PC-9 (cell line): ENCODE measurements at regions of chr6 and their contacts with region 1.

Region 1: GRCh38 chr6:112289038-112289566 is 34.7 kb upstream of the LAMA4 start:
- DNase-seq: no peak
- H3K4me3 ChIP-seq: no peak overlapping the region
- H3K27ac ChIP-seq: no peak overlapping the region
- H3K4me1 ChIP-seq: peaks cover 13% of the 10 kb centered on the region
- H3K27me3 ChIP-seq: no peaks in the 10 kb centered on the region
- CTCF ChIP-seq: no peak

Region 2: GRCh38 chr6:111950661-111951496 is 338.2 kb before region 1 on chr6:
- CTCF ChIA-PET with region 1: no interaction called
- POLR2A ChIA-PET with region 1: no interaction called
- intact Hi-C with region 1: no loop called
- DNase-seq: no peak
- H3K4me3 ChIP-seq: no peak overlapping the region
- H3K27ac ChIP-seq: no peak overlapping the region
- H3K4me1 ChIP-seq: peaks cover 14% of the 10 kb centered on the region
- H3K27me3 ChIP-seq: no peaks in the 10 kb centered on the region
- CTCF ChIP-seq: no peak

Region 3: GRCh38 chr6:112153926-112154607 is 135.0 kb before region 1 on chr6:
- CTCF ChIA-PET with region 1: no interaction called
- POLR2A ChIA-PET with region 1: no interaction called
- intact Hi-C with region 1: no loop called
- DNase-seq: peak in 1 of 2 experiments; percentile 77
- H3K4me3 ChIP-seq: no peak overlapping the region
- H3K27ac ChIP-seq: peak overlapping the region; percentile 70
- H3K4me1 ChIP-seq: peaks cover 11% of the 10 kb centered on the region
- H3K27me3 ChIP-seq: no peaks in the 10 kb centered on the region
- CTCF ChIP-seq: no peak

Region 4: DNA sequence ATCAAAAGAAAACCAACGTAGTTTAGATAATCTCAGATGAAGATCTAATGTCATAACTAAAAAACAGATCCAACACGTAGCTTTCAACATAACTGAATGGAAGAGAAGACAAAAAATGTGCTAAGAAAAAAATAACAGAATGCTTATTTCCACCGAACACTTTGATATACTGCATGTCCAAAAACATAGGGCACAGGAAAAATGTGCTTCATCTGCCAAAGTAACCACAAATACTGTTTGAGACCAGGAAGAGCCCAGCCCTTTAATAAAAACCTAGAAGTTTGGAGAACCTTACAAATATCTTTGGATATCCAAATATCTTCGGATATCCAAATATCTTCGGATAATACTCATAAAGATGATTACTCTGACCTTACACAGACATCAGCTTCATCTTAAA is 54.5 kb before region 1 on chr6:
- CTCF ChIA-PET with region 1: no interaction called
- POLR2A ChIA-PET with region 1: interaction called, 11 read pairs
- intact Hi-C with region 1: no loop called
- DNase-seq: no peak
- H3K4me3 ChIP-seq: no peak overlapping the region
- H3K27ac ChIP-seq: no peak overlapping the region
- H3K4me1 ChIP-seq: peaks cover 22% of the 10 kb centered on the region
- H3K27me3 ChIP-seq: no peaks in the 10 kb centered on the region
- CTCF ChIP-seq: no peak